Heart left ventricle (tissue), 16 donors: ENCODE measurements at regions of chr10 and their contacts with region 1.

Region 1: GRCh38 chr10:96470116-96470743 is 43.5 kb downstream of the TLL2 start:
- DNase-seq: peak in 4 of 5 donors; percentile 20 to 62 (median 38)
- ATAC-seq: peak; percentile 55 to 83 (median 78)
- H3K4me3 ChIP-seq: no peak overlapping the region
- H3K27ac ChIP-seq: no peak overlapping the region
- H3K4me1 ChIP-seq: peaks cover 0 to 9% (median 0%) of the 10 kb centered on the region in 12 donors
- H3K27me3 ChIP-seq: no peaks in the 10 kb centered on the region
- CTCF ChIP-seq: peak; percentile 25 to 63 (median 46)
- POLR2A ChIP-seq: no peak

Region 2: GRCh38 chr10:96416643-96417042 is 53.6 kb before region 1 on chr10:
- intact Hi-C with region 1: loop called in 1 of 10 experiments (anchors 10 kb)
- DNase-seq: peak in 4 of 5 donors; percentile 44 to 59 (median 56)
- ATAC-seq: peak; percentile 39 to 75 (median 64)
- H3K4me3 ChIP-seq: no peak overlapping the region
- H3K27ac ChIP-seq: peak overlapping the region in 3 of 12 donors; percentile 14 to 47 (median 23)
- H3K4me1 ChIP-seq: peaks cover 0 to 41% (median 14%) of the 10 kb centered on the region in 12 donors
- H3K27me3 ChIP-seq: no peaks in the 10 kb centered on the region
- CTCF ChIP-seq: no peak
- POLR2A ChIP-seq: no peak

Region 3: DNA sequence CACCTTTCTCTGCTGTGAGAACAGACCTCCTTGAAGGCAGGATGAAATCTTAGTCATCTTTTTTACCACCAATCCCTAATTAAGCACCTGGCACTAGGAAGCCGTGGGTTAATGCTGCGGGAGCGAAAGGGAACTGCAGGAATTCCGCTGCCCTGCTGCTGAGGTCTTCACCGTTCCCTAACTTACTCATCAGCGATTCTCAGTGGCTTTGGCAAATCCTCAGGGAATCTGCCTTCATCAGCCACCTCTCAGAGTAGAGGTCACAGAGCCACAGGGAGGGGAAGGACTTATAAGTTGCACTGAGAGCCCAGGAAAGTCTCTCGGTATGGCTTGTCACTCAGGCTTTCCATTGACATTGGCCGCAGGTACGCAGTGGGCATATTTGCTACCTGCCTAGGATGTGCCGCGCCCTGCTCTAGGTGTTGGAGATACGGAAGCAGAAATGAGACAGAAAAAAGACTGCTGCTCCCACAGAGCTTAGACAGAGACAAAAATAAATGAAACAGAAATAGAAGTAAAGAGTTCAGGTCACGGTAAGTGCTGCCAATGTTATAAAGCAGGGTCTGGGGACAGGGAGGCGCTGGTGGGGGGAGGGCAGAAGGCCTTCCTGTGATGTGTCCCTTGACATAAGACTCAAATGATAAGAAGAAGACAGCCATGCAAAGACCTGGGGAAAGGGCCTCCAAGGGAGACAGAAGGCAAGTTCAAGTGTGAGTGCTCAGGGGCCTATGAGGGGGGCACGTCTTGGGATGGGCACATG is 38.8 kb before region 1 on chr10:
- intact Hi-C with region 1: no loop called
- DNase-seq: no peak
- ATAC-seq: peak in 3 of 4 donors; percentile 18 to 26 (median 20)
- H3K4me3 ChIP-seq: no peak overlapping the region
- H3K27ac ChIP-seq: no peak overlapping the region
- H3K4me1 ChIP-seq: peaks cover 0 to 8% (median 0%) of the 10 kb centered on the region in 12 donors
- H3K27me3 ChIP-seq: no peaks in the 10 kb centered on the region
- CTCF ChIP-seq: no peak
- POLR2A ChIP-seq: no peak